ENCODE measurements at regions of chr2 and their contacts with region 1.

Region 1: GRCh38 chr2:127807678-127808353 is 3.2 kb downstream of the WDR33 start:
- DNase-seq: no peak
- H3K4me3 Mint-ChIP-seq: peak overlapping the region; percentile 16
- H3K27ac Mint-ChIP-seq: no peak overlapping the region
- H3K4me1 Mint-ChIP-seq: peaks cover 30% of the 10 kb centered on the region
- H3K27me3 Mint-ChIP-seq: no peaks in the 10 kb centered on the region
- CTCF ChIP-seq: no peak

Region 2: DNA sequence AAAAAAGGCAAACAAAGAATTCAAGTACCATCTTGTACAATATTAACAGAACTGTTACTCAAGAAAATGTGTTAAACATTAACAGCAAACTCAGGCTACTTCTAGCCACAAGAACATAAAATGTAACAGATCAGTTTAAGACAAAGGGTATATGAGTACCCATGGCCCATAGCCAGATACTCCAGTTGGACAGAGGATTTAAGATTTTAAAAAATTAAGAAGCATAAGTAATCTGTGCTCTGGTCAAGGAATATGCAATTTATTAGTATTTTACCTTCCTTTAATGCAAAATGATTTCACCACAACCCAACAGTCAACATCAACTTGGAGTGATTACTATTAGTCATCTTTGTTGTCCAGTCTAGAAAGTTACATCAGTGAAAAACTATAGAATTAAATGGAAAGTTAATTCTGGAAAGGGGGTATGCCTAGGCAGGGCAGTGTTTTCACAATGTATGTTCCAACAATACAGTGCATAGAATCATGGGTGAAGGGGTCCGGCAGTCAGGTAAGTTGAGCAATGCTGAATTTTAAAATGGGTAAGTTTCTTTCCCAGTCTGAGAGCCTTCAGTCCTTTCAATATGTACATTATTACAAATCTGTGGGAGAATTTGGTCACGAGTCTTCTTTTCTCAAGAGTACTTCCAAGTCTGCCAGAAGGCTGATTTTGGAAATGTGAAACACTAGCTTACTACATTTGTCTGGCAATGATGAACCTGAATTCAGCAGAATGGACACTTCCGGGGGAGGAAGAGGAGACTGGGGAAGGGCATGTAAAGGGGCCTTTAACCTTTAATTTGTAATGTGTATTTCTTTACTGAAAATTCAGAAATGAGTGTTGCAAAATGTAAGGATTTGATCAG is 72.0 kb before region 1 on chr2:
- CTCF ChIA-PET with region 1: no interaction called
- intact Hi-C with region 1: loop called (anchors 5 kb)
- DNase-seq: peak; percentile 7
- H3K4me3 Mint-ChIP-seq: peak overlapping the region; percentile 42
- H3K27ac Mint-ChIP-seq: peak overlapping the region; percentile 82
- H3K4me1 Mint-ChIP-seq: peaks cover 65% of the 10 kb centered on the region
- H3K27me3 Mint-ChIP-seq: no peaks in the 10 kb centered on the region
- CTCF ChIP-seq: no peak

Region 3: GRCh38 chr2:127763776-127764175 is 44.0 kb before region 1 on chr2:
- CTCF ChIA-PET with region 1: no interaction called
- intact Hi-C with region 1: loop called (anchors 5 kb)
- DNase-seq: no peak
- H3K4me3 Mint-ChIP-seq: no peak overlapping the region
- H3K27ac Mint-ChIP-seq: no peak overlapping the region
- H3K4me1 Mint-ChIP-seq: no peaks in the 10 kb centered on the region
- H3K27me3 Mint-ChIP-seq: no peaks in the 10 kb centered on the region
- CTCF ChIP-seq: no peak